Natural killer cell (primary cell): ENCODE measurements at regions of chr3 and their contacts with region 1.

Region 1: DNA sequence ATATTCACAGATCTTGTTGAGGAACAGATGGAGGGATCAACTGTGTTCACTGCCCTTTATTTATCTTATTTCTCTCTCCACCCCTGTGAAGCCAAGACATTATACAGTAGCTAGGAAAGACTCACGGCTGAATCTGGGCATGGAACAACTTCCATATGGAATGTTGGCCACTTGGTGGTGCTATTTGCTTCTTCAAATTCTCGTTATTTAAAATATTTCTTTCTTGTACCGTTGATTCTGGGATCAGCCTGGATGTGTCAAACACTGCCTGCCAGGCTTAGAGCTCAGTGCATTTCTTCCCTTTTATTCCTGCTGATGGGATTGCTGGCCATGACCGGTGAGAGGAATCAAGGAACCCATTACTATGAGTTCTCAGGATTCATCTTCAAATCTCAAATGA is 17.5 kb upstream of the GASK1A start:
- DNase-seq: peak in 1 of 2 donors; percentile 72
- ATAC-seq: peak in 1 of 3 donors; percentile 39
- H3K4me3 ChIP-seq: no peak overlapping the region
- H3K4me3 Mint-ChIP-seq: no peak overlapping the region
- H3K27ac ChIP-seq: no peak overlapping the region
- H3K27ac Mint-ChIP-seq: no peak overlapping the region
- H3K4me1 ChIP-seq: no peaks in the 10 kb centered on the region
- H3K4me1 Mint-ChIP-seq: peaks cover 0 to 5% of the 10 kb centered on the region in 2 donors
- H3K27me3 ChIP-seq: no peaks in the 10 kb centered on the region
- H3K27me3 Mint-ChIP-seq: peaks cover 7 to 13% of the 10 kb centered on the region in 2 donors
- CTCF ChIP-seq: peak; percentile 71

Region 2: DNA sequence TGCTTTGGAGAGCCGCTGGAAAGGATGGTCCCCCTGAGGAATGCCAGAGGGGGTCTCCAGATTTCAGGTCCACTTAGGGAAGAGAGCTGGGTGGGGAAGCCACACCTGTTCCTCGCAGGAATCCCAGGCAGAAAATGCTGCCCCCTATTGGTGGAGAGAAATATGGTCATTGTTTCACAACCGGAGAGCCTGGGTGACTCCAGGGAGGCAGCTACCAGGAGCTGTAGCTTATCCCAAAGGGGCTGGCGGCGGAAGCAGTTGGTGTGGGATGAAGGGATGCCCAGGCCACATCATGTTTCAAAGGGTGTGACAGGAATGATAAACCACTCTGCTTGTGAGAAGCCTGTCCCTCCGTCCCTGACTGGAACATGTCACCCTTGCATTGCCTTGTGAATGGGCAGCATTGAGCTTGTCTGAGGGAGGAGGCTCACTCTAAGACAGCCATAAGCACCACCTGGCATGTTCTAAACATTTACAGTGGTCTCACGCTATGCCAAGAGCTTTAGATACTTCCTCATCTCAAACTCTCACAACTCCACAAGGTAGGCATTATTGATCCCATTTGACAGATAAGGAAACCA is 109.8 kb after region 1 on chr3:
- intact Hi-C with region 1: loop called (anchors 1 kb)
- DNase-seq: peak in 1 of 2 donors; percentile 66
- ATAC-seq: no peak
- H3K4me3 ChIP-seq: no peak overlapping the region
- H3K4me3 Mint-ChIP-seq: no peak overlapping the region
- H3K27ac ChIP-seq: no peak overlapping the region
- H3K27ac Mint-ChIP-seq: no peak overlapping the region
- H3K4me1 ChIP-seq: no peaks in the 10 kb centered on the region
- H3K4me1 Mint-ChIP-seq: no peaks in the 10 kb centered on the region
- H3K27me3 ChIP-seq: no peaks in the 10 kb centered on the region
- H3K27me3 Mint-ChIP-seq: no peaks in the 10 kb centered on the region
- CTCF ChIP-seq: peak; percentile 59

Region 3: GRCh38 chr3:43087249-43087776 is 125.7 kb after region 1 on chr3:
- intact Hi-C with region 1: loop called (anchors 5 kb)
- DNase-seq: peak in 1 of 2 donors; percentile 42
- ATAC-seq: no peak
- H3K4me3 ChIP-seq: no peak overlapping the region
- H3K4me3 Mint-ChIP-seq: no peak overlapping the region
- H3K27ac ChIP-seq: no peak overlapping the region
- H3K27ac Mint-ChIP-seq: no peak overlapping the region
- H3K4me1 ChIP-seq: no peaks in the 10 kb centered on the region
- H3K4me1 Mint-ChIP-seq: peaks cover 5 to 15% of the 10 kb centered on the region in 2 donors
- H3K27me3 ChIP-seq: no peaks in the 10 kb centered on the region
- H3K27me3 Mint-ChIP-seq: no peaks in the 10 kb centered on the region
- CTCF ChIP-seq: no peak

Region 4: DNA sequence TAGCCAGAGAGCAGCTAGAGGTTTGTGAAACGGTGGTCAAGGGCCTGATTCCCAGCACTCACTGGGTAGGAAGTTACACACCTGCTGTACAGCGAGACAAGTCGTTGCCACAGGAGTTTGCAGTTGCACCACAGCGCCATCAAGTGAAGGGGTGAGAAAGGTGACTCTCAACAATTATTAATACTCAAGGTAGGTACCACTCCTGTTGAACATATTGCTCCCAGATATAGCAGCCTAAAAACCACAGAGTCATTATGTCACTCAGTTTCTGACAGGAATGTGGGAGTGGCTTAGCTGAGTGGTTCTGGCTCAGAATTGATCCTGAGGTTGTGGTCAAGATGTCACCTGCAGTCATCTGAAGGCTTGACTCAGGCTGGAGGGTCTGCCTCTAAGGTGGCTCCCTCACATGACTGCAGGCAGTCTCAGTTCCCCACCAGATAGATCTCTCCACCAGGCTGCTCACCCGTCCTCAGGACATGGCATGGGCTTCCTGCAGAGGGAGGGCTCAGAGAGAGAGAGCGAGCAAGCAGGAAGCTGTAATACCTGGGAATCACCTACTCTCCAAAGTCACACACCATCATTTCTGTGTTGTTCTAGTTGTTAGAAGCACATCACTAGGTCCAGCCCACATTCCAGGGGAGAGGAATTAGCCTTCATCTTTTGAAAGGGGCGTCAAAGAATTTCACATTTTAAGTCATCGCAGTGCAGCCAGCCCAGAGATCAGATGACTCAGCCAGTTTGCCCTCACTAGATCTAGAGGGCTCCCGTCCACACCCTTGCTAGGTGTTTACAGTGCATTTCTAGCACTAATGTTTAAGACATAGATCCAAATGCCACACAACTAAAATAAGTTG is 677.2 kb after region 1 on chr3:
- intact Hi-C with region 1: loop called (anchors 5 kb)
- DNase-seq: peak in 1 of 2 donors; percentile 60
- ATAC-seq: peak; percentile 40 to 62 (median 60)
- H3K4me3 ChIP-seq: no peak overlapping the region
- H3K4me3 Mint-ChIP-seq: no peak overlapping the region
- H3K27ac ChIP-seq: no peak overlapping the region
- H3K27ac Mint-ChIP-seq: no peak overlapping the region
- H3K4me1 ChIP-seq: no peaks in the 10 kb centered on the region
- H3K4me1 Mint-ChIP-seq: no peaks in the 10 kb centered on the region
- H3K27me3 ChIP-seq: no peaks in the 10 kb centered on the region
- H3K27me3 Mint-ChIP-seq: peaks cover 0 to 14% of the 10 kb centered on the region in 2 donors
- CTCF ChIP-seq: peak; percentile 15